ENCODE measurements at regions of chr18 and their contacts with region 1.

Region 1: DNA sequence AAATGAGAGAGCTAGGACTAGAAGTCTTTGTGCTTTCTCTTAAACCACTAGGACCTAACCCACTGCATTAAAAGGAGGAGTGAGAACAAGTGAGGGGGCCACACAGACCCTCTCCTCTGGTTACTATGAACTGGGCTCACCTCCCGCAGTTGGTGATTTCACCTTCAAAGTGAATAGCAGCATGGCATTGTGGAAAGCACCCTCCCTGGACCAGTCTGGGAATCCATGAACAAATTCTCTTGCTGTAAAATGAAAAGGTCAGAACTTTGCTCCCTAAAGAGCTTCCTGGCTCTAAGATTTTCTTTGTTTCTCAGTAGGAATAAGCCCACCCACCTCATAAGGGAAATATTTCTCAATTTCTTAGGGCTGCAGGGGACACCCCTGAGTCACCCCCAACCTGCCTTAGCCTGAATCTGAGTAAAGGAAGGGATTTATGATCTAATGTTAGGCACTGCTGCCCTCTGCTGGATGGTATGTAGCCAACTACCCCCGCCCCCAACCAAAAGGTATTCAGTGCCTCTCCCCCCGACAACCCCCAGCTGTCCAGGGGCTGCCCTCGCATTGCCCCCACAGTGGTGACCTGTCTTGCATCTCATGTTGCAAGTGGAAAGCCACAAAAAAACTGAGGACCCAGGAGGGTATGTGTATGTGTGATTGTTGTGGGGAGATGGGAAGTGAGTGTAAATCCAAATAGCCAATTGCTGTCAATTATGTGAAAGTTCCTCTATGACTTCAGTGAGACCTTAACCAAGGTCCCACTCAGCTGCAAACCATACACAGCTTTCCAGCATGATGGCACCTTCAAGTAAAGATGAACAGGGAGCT is 230.9 kb upstream of the SLC14A2 start:
- DNase-seq: peak; percentile 42
- H3K4me3 ChIP-seq: no peak overlapping the region
- H3K27ac ChIP-seq: no peak overlapping the region
- H3K4me1 ChIP-seq: no peaks in the 10 kb centered on the region
- CTCF ChIP-seq: peak; percentile 72

Region 2: GRCh38 chr18:44130376-44130942 is 1253.9 kb before region 1 on chr18:
- CTCF ChIA-PET with region 1: no interaction called
- POLR2A ChIA-PET with region 1: no interaction called
- intact Hi-C with region 1: loop called (anchors 2 kb)
- DNase-seq: peak; percentile 31
- H3K4me3 ChIP-seq: no peak overlapping the region
- H3K27ac ChIP-seq: no peak overlapping the region
- H3K4me1 ChIP-seq: no peaks in the 10 kb centered on the region
- CTCF ChIP-seq: peak; percentile 75

Region 3: GRCh38 chr18:45275367-45276113 is 108.8 kb before region 1 on chr18:
- CTCF ChIA-PET with region 1: no interaction called
- POLR2A ChIA-PET with region 1: interaction called, 3 read pairs
- intact Hi-C with region 1: loop called (anchors 2 kb)
- DNase-seq: peak; percentile 19
- H3K4me3 ChIP-seq: no peak overlapping the region
- H3K27ac ChIP-seq: no peak overlapping the region
- H3K4me1 ChIP-seq: no peaks in the 10 kb centered on the region
- CTCF ChIP-seq: peak; percentile 82

Measured in OCI-LY7 (cell line).